Prostate gland (tissue), 2 donors: ENCODE measurements at regions of chr5 and their contacts with region 1.

Region 1: DNA sequence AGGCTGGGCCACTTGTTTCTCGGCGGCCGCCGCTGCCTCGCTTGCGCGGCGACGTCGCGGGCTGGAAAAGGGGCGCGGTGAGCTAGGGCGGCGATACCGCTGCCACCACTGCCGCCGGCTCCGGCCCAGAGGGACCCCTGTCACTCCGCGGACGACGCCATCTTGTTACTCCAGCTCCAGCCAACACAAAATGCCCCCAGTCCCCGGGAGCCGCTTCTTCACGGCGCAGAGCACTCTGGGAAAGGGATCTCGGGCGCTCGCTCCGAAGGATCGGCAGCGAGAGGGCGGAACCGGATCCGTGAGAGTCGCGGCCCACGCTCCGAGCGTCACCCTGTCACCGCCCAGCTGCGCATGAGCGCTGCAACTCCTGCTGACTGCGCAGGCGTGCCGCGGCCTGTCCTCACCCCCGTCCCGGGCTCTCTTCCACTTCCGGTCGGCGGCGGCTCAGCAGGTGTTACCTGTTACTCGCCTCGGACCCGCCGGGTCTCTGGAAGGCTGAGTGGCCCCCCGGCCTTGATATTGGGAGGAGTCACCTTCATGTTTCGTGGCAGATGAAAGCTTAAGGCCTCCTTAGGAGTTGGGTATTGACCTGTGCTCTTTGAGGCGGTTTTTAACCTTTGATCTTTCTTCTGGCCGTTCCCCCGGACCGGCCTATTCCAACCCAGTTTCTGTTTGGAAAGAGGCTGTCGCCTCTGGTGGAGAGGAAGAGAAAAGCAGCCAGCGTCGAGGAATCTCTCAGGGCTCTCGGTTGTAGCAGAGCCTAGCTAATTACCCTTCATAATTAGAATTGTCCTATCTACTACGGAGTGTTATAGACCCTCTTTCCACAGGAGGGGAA is at the start of gene CSNK1A1:
- DNase-seq: peak; percentile 97
- H3K4me3 ChIP-seq: peak within 1 kb of the TSS; percentile 87 to 94
- H3K27ac ChIP-seq: peak within 1 kb of the TSS; percentile 99
- H3K4me1 ChIP-seq: no peaks in the 10 kb centered on the region
- H3K27me3 ChIP-seq: no peaks in the 10 kb centered on the region
- CTCF ChIP-seq: peak; percentile 53 to 94 (median 80)
- POLR2A ChIP-seq: peak; percentile 94
- total RNA-seq, gene CSNK1A1: 219 to 269 TPM

Region 2: GRCh38 chr5:149367249-149367971 is 184.0 kb before region 1 on chr5:
- intact Hi-C with region 1: loop called (anchors 5 kb)
- DNase-seq: peak; percentile 52
- H3K4me3 ChIP-seq: no peak overlapping the region
- H3K27ac ChIP-seq: no peak overlapping the region
- H3K4me1 ChIP-seq: no peaks in the 10 kb centered on the region
- H3K27me3 ChIP-seq: no peaks in the 10 kb centered on the region
- CTCF ChIP-seq: peak; percentile 40 to 75 (median 64)
- POLR2A ChIP-seq: no peak

Region 3: DNA sequence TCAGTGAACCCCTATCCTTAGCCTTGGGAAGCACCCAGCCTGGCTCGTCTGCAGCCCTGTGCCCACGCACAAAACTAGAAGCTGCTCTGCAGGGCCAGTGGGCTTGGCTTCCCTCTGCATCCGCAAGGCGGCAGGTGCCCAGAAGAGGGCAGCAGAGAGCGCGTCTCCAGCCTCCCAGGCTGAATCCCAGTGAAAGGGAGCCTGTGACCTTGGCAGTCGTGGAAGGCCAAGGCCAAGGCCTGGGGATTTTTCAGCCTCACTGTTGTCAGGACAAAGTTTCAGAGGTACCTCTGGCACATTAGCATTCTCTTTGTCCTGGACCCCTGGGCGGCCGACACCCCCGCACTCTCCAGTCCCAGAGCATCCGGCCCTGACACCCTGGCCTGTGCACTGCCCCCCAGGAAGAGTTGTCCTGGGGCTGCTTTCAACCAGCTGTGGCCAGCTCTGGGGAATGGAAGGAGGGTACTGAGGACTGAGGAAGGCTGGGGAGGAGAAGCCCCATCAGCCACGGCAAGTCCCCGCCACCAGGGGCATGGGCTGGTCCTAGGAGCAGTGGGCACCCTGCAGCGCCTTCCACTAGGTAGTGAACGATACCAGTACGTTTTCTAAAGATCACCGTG is 108.7 kb before region 1 on chr5:
- intact Hi-C with region 1: loop called (anchors 2 kb)
- DNase-seq: peak; percentile 74
- H3K4me3 ChIP-seq: no peak overlapping the region
- H3K27ac ChIP-seq: peak overlapping the region in 1 of 2 donors; percentile 86
- H3K4me1 ChIP-seq: peaks cover 4% of the 10 kb centered on the region
- H3K27me3 ChIP-seq: no peaks in the 10 kb centered on the region
- CTCF ChIP-seq: peak; percentile 78 to 98 (median 95)
- POLR2A ChIP-seq: no peak

Region 4: GRCh38 chr5:149452007-149452664 is 99.3 kb before region 1 on chr5:
- intact Hi-C with region 1: loop called (anchors 2 kb)
- DNase-seq: no peak
- H3K4me3 ChIP-seq: no peak overlapping the region
- H3K27ac ChIP-seq: peak overlapping the region; percentile 71
- H3K4me1 ChIP-seq: peaks cover 7% of the 10 kb centered on the region
- H3K27me3 ChIP-seq: no peaks in the 10 kb centered on the region
- CTCF ChIP-seq: no peak
- POLR2A ChIP-seq: no peak

Region 5: GRCh38 chr5:149485655-149486425 is 65.6 kb before region 1 on chr5:
- intact Hi-C with region 1: loop called (anchors 5 kb)
- DNase-seq: peak; percentile 99
- H3K4me3 ChIP-seq: no peak overlapping the region
- H3K27ac ChIP-seq: peak overlapping the region; percentile 84 to 94
- H3K4me1 ChIP-seq: peaks cover 33% of the 10 kb centered on the region
- H3K27me3 ChIP-seq: no peaks in the 10 kb centered on the region
- CTCF ChIP-seq: no peak
- POLR2A ChIP-seq: no peak

Region 6: GRCh38 chr5:150075871-150076288 is 524.5 kb after region 1 on chr5:
- intact Hi-C with region 1: no loop called
- DNase-seq: no peak
- H3K4me3 ChIP-seq: no peak overlapping the region
- H3K27ac ChIP-seq: no peak overlapping the region
- H3K4me1 ChIP-seq: no peaks in the 10 kb centered on the region
- H3K27me3 ChIP-seq: no peaks in the 10 kb centered on the region
- CTCF ChIP-seq: no peak
- POLR2A ChIP-seq: no peak